Caco-2 (cell line): ENCODE measurements at regions of chr7 and their contacts with region 1.

Region 1: DNA sequence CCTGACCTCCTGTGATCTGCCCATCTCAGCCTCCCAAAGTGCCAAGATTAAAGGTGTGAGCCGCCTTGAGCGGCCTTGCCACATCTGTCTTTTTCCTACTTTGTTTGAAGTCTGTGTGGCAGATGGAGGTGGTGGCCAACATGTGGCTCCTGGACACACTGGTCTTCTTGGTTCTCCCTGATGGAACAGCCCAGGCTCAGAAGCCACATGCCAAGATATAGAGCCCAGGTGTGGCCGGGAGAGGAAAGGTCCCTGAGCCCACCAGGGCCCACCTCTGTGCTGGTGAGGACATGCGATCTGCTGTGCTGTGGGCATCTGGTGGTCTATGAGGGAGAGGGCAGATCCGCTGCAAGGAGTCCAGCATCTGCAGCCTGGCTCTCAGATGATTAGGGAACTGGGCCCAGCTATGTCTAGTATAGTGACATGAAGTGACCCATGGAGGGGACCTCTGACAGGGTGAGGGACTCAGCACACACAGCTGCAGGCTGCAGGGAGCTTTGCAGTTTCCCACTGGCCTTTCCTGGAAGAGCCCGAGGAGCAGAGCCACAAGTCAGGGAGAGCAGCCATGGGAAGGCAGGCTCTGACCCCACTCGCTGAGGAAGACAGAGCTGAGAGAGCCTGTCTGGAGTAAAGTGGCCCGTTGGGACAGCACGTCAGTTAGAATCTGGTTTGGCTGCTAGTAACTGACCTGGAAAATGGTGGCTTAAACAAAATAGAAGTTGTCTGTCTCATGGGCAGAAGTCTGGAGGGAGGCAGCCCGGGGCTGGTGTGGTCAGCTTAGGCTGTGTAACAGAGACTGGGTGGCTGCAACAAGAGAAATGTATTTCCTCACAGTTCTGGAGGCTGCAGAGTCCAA is 25.9 kb downstream of the ADCY1 start:
- DNase-seq: no peak
- H3K4me3 ChIP-seq: no peak overlapping the region
- H3K4me3 Mint-ChIP-seq: no peak overlapping the region
- H3K27ac Mint-ChIP-seq: no peak overlapping the region
- H3K4me1 ChIP-seq: no peaks in the 10 kb centered on the region
- H3K4me1 Mint-ChIP-seq: no peaks in the 10 kb centered on the region
- H3K27me3 ChIP-seq: no peaks in the 10 kb centered on the region; the same call in 1 of the 2 replicates
- H3K27me3 Mint-ChIP-seq: peaks cover 12% of the 10 kb centered on the region
- CTCF ChIP-seq: no peak

Region 2: DNA sequence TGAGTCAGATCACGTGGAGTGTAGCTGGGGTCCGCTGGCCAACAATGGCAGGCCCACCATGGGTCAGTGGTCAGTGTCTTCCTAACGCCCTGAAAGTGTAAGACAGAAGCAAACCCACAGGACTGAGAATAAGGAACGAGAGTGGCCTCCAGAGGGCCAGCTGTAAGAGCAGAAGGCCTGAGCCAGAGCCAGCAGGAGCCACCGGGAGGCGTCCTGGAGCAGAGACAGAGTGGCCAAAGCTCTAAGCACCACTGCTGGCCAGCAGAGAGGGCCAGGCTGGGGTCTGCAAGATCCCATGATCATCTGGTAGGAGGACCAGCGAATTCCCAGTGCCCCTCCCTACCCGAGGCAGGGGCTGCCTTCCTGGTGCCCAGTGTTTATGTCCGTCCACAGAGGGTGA is 263.6 kb after region 1 on chr7:
- CTCF ChIA-PET with region 1: no interaction called
- POLR2A ChIA-PET with region 1: no interaction called
- intact Hi-C with region 1: loop called (anchors 10 kb)
- DNase-seq: peak in 1 of 2 experiments; percentile 24
- H3K4me3 ChIP-seq: no peak overlapping the region
- H3K4me3 Mint-ChIP-seq: no peak overlapping the region
- H3K27ac Mint-ChIP-seq: no peak overlapping the region
- H3K4me1 ChIP-seq: no peaks in the 10 kb centered on the region
- H3K4me1 Mint-ChIP-seq: no peaks in the 10 kb centered on the region
- H3K27me3 ChIP-seq: no peaks in the 10 kb centered on the region; the same call in none of the 2 replicates
- H3K27me3 Mint-ChIP-seq: peaks cover 18% of the 10 kb centered on the region
- CTCF ChIP-seq: peak in 1 of 2 experiments; percentile 34